ENCODE measurements at regions of chr1 and their contacts with region 1.

Region 1: DNA sequence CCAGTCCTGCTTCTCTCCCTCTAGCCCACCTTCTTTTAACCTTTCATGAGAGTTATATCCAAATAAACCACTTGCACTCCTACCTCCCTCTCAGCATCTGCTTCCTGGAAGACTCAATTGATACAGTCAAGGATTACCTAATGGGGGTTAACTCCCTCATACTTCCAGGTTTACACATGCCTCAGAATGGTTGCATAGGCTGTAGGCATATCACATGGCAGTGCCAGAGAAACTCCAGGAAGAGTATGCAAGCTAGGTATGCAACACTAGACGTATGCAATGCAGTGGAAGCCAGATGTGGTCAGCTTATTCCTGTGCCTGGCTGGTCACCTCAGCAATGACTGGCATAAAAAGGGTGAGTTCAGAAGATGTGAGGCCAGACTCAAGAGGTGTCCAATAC is 32.7 kb upstream of the VANGL1 start:
- DNase-seq: peak; percentile 52
- H3K4me3 ChIP-seq: no peak overlapping the region
- H3K27ac ChIP-seq: no peak overlapping the region
- H3K4me1 ChIP-seq: peaks cover 14% of the 10 kb centered on the region
- H3K27me3 ChIP-seq: no peaks in the 10 kb centered on the region
- CTCF ChIP-seq: no peak

Region 2: GRCh38 chr1:115526900-115527299 is 82.1 kb before region 1 on chr1:
- CTCF ChIA-PET with region 1: no interaction called
- dilution Hi-C with region 1: no loop called
- in situ Hi-C with region 1: no loop called
- intact Hi-C with region 1: no loop called
- DNase-seq: no peak
- H3K4me3 ChIP-seq: no peak overlapping the region
- H3K27ac ChIP-seq: no peak overlapping the region
- H3K4me1 ChIP-seq: peaks cover 23% of the 10 kb centered on the region
- H3K27me3 ChIP-seq: no peaks in the 10 kb centered on the region
- CTCF ChIP-seq: no peak

Region 3: DNA sequence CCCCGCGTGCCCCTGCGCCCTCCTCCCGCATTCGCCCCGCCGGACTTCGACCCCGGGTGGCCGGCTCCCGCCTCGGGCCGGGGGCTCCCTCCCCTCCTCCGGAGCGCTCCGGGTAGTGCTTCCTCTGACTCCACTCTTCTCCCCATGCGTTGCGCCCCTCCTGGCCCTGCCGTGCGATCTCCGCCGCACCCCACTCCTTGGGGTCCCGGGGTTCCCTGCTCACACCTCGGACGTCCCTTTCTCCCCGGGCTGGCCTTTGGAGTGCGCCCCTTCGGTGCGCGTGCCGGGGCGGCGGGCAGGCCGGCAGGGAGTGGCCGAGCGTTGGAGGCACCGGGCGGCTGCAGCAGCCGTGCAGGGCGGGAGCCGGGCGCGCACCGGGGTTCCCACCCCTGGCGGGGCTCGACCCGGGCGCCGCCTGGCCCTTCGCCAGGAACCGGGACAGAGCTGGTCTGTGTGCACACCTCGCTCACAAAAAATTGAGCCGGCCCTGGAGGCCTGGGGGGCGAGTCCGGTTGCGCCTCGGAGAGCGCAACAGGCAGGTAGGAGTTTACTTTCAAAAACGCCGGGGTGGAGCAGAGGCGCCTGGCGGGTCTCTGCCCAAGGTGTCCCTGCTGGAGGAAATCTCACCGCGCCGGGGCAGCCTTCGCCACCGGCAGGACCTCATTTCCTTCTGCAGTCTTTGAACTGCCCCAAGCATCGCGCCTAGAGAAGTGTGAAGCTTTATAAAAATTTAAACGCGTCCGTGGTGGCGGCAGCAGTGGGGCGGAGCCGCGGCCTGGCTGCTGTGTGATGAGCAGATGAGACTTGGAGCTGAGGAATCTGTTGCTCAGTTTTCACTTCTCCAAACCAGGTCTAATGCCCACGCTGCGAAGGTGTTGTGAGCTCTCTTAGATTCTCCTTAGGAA is 33.4 kb after region 1 on chr1:
- CTCF ChIA-PET with region 1: no interaction called
- dilution Hi-C with region 1: no loop called
- in situ Hi-C with region 1: no loop called
- intact Hi-C with region 1: no loop called
- DNase-seq: peak; percentile 70
- H3K4me3 ChIP-seq: peak overlapping the region; percentile 61 to 88 (median 67)
- H3K27ac ChIP-seq: peak overlapping the region; percentile 50
- H3K4me1 ChIP-seq: peaks cover 14% of the 10 kb centered on the region
- H3K27me3 ChIP-seq: no peaks in the 10 kb centered on the region
- CTCF ChIP-seq: peak; percentile 8 to 35

Region 4: GRCh38 chr1:115717541-115717940 is 108.5 kb after region 1 on chr1:
- CTCF ChIA-PET with region 1: no interaction called
- dilution Hi-C with region 1: loop called (anchors 5 kb)
- in situ Hi-C with region 1: no loop called
- intact Hi-C with region 1: no loop called
- DNase-seq: peak; percentile 30
- H3K4me3 ChIP-seq: no peak overlapping the region
- H3K27ac ChIP-seq: no peak overlapping the region
- H3K4me1 ChIP-seq: peaks cover 27% of the 10 kb centered on the region
- H3K27me3 ChIP-seq: no peaks in the 10 kb centered on the region
- CTCF ChIP-seq: peak; percentile 39 to 46

Region 5: DNA sequence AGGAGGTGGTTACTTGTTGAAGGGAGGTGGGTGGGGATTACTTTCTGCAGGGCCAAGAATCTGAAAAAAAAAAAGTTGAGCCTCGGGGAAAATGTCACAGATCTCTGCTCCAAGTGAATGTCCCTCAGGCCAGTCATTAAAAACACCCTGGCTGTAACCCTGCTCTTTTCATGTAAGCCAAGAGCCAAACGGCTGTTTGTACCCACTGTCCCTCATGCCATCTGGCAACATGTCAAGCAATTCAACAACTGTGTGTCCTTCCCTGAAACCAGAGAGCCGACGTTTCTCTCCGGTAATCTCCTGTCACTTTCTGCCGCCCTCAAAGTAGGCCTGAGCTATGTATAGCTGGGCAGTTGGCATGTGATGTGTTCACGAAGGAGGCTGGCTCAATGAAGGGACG is 144.8 kb after region 1 on chr1:
- CTCF ChIA-PET with region 1: no interaction called
- dilution Hi-C with region 1: no loop called
- in situ Hi-C with region 1: loop called in 1 of 2 experiments (anchors 10 kb)
- intact Hi-C with region 1: no loop called
- DNase-seq: no peak
- H3K4me3 ChIP-seq: no peak overlapping the region
- H3K27ac ChIP-seq: no peak overlapping the region
- H3K4me1 ChIP-seq: peaks cover 1% of the 10 kb centered on the region
- H3K27me3 ChIP-seq: no peaks in the 10 kb centered on the region
- CTCF ChIP-seq: no peak

Region 6: DNA sequence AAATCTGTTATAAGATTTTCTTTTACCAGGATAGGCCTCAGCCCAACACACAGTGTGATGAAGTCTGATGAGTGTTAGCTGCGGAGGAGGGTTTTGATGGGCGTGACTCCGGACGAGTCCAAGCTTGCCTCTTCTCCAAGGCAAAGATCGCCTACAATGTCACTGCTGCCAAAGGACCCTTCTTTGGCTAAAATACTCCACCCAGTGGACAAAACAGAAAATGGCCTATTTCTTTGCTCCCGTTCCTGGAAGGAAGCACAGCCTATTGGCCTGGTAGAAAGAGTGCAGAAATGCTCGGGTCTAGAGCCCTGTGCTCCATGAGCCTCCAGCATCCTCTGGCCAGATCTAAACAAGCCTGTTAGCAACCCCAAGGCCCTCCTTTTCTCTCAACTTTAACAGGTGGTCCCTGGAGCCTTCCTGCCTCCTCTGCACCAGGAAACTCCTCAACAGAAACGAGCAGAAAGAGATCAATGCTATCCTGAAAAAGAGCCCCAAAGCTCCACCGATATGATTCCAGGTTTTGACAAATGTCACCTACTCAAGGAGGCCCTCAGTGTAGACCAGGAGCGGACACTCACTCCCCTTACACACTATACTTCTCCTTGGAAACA is 162.9 kb after region 1 on chr1:
- CTCF ChIA-PET with region 1: no interaction called
- dilution Hi-C with region 1: no loop called
- in situ Hi-C with region 1: loop called in 1 of 2 experiments (anchors 5 kb)
- intact Hi-C with region 1: loop called (anchors 1 kb)
- DNase-seq: peak; percentile 94
- H3K4me3 ChIP-seq: no peak overlapping the region
- H3K27ac ChIP-seq: peak overlapping the region; percentile 86
- H3K4me1 ChIP-seq: peaks cover 6% of the 10 kb centered on the region
- H3K27me3 ChIP-seq: no peaks in the 10 kb centered on the region
- CTCF ChIP-seq: peak; percentile 80 to 87

Region 7: GRCh38 chr1:116498789-116499628 is 890.0 kb after region 1 on chr1:
- CTCF ChIA-PET with region 1: no interaction called
- dilution Hi-C with region 1: no loop called
- in situ Hi-C with region 1: no loop called
- intact Hi-C with region 1: loop called (anchors 10 kb)
- DNase-seq: peak; percentile 60
- H3K4me3 ChIP-seq: no peak overlapping the region
- H3K27ac ChIP-seq: no peak overlapping the region
- H3K4me1 ChIP-seq: peaks cover 13% of the 10 kb centered on the region
- H3K27me3 ChIP-seq: no peaks in the 10 kb centered on the region
- CTCF ChIP-seq: peak; percentile 82 to 84